ENCODE measurements at regions of chr4 and their contacts with region 1.

Region 1: DNA sequence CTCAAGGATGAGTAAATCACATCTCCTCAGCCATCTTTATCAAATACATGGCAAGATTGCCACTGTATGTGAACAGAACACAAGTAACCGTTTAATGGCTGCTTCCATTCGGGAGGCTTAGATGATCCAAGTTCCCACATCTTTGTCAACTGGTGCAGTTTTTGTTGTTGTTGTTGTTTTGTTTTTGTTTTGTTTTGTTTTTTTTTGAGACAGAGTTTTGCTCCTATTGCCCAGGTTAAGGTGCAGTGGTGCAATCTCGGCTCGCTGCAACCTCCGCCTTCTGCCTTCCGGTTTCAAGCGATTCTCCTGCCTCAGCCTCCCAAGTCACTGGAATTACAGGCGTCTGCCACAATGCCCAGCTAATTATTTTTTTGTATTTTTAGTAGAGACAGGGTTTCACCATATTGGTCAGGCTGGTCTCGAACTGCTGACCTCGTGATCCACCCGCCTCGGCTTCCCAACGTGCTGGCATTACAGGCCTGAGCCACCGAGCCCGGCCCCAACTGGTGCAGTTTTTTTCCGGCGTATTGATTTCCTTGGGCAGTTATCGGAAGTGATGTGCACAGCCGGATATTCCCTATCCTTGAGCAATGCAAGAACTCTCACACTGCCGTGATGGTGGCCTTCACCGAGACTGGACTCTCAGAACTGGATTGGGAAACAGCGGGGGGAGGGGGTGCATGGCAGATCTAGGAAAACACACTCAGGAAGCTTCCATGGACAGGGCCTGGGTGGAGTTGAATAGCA is 29.2 kb upstream of the TRIM2 start:
- DNase-seq: no peak
- ATAC-seq: no peak
- H3K4me3 ChIP-seq: no peak overlapping the region
- H3K27ac ChIP-seq: no peak overlapping the region
- H3K4me1 ChIP-seq: no peaks in the 10 kb centered on the region
- H3K27me3 ChIP-seq: peaks cover 0 to 7% (median 0%) of the 10 kb centered on the region in 7 donors
- CTCF ChIP-seq: no peak

Region 2: GRCh38 chr4:152999346-153000075 is 175.5 kb before region 1 on chr4:
- intact Hi-C with region 1: loop called in 1 of 10 experiments (anchors 2 kb)
- DNase-seq: no peak
- ATAC-seq: no peak
- H3K4me3 ChIP-seq: no peak overlapping the region
- H3K27ac ChIP-seq: no peak overlapping the region
- H3K4me1 ChIP-seq: peaks cover 0 to 13% (median 8%) of the 10 kb centered on the region in 9 donors
- H3K27me3 ChIP-seq: peaks cover 0 to 34% (median 4%) of the 10 kb centered on the region in 7 donors
- CTCF ChIP-seq: no peak

Region 3: DNA sequence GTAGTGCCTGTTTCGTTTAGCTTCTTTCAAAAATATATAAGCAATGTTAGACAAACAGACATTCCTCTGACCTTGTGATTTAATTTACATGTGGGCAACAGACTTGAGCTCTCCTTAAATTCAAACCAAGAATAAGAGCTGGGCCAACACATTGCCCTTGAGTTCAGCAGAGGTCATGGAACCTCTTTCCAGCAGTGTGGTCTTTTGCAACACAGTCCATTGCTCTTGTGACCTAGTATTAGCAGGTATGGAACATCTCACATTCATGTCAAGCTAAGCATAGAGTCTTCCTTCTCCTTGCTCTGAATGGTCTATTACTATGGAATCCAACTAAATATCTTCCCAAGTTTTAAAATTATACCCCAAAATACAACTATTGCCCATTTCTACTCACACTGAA is 135.8 kb after region 1 on chr4:
- intact Hi-C with region 1: no loop called
- DNase-seq: no peak
- ATAC-seq: peak in 1 of 8 donors; percentile 41
- H3K4me3 ChIP-seq: no peak overlapping the region
- H3K27ac ChIP-seq: no peak overlapping the region
- H3K4me1 ChIP-seq: peaks cover 0 to 8% (median 0%) of the 10 kb centered on the region in 9 donors
- H3K27me3 ChIP-seq: no peaks in the 10 kb centered on the region
- CTCF ChIP-seq: no peak